HepG2 (cell line): ENCODE measurements at regions of chr2 and their contacts with region 1.

Region 1: GRCh38 chr2:177263451-177264208 is 897 bp downstream of the NFE2L2 start:
- DNase-seq: peak; percentile 96
- ATAC-seq: peak; percentile 61
- H3K4me3 ChIP-seq: peak overlapping the region; percentile 94 to 99 (median 98)
- H3K27ac ChIP-seq: peak overlapping the region; percentile 100
- H3K4me1 ChIP-seq: peaks cover 66% of the 10 kb centered on the region
- H3K27me3 ChIP-seq: no peaks in the 10 kb centered on the region; a peak in 1 of 5 replicates
- CTCF ChIP-seq: peak; percentile 98
- EP300 ChIP-seq: peak; percentile 92 to 99
- POLR2A ChIP-seq: peak; percentile 78 to 89
- RAD21 ChIP-seq: peak; percentile 99

Region 2: GRCh38 chr2:177078416-177078815 is 185.2 kb before region 1 on chr2:
- CTCF ChIA-PET with region 1: no interaction called
- POLR2A ChIA-PET with region 1: no interaction called
- in situ Hi-C with region 1: no loop called
- intact Hi-C with region 1: no loop called
- DNase-seq: no peak
- ATAC-seq: no peak
- H3K4me3 ChIP-seq: no peak overlapping the region
- H3K27ac ChIP-seq: no peak overlapping the region
- H3K4me1 ChIP-seq: no peaks in the 10 kb centered on the region
- H3K27me3 ChIP-seq: peaks cover 0 to 8% of the 10 kb centered on the region in 2 experiments; a peak in 2 of 5 replicates
- CTCF ChIP-seq: no peak
- EP300 ChIP-seq: no peak
- POLR2A ChIP-seq: no peak
- RAD21 ChIP-seq: no peak

Region 3: DNA sequence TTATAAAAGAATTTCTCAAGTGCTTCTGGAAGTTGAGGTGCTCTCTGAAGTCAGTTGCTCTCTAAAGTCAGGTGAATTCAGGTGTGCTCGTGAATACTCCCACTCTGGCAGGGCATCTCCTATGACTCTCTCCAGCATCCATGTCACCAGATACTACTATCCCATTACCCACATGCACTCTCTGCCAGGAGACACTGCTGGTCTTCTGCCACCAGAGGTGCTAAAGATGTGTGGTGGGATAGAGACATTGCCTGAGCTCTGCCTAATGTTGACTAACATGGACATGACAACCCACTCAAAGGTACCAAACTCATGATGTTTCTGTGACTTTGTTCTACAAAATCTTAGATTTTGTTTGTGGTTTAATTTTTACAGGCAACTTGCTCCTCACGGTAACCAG is 157.4 kb before region 1 on chr2:
- CTCF ChIA-PET with region 1: no interaction called
- POLR2A ChIA-PET with region 1: no interaction called
- in situ Hi-C with region 1: no loop called
- intact Hi-C with region 1: no loop called
- DNase-seq: peak; percentile 34
- ATAC-seq: peak; percentile 100
- H3K4me3 ChIP-seq: no peak overlapping the region
- H3K27ac ChIP-seq: no peak overlapping the region
- H3K4me1 ChIP-seq: no peaks in the 10 kb centered on the region
- H3K27me3 ChIP-seq: peaks cover 0 to 12% of the 10 kb centered on the region in 2 experiments; a peak in 2 of 5 replicates
- CTCF ChIP-seq: peak; percentile 35
- EP300 ChIP-seq: no peak
- POLR2A ChIP-seq: no peak
- RAD21 ChIP-seq: no peak

Region 4: DNA sequence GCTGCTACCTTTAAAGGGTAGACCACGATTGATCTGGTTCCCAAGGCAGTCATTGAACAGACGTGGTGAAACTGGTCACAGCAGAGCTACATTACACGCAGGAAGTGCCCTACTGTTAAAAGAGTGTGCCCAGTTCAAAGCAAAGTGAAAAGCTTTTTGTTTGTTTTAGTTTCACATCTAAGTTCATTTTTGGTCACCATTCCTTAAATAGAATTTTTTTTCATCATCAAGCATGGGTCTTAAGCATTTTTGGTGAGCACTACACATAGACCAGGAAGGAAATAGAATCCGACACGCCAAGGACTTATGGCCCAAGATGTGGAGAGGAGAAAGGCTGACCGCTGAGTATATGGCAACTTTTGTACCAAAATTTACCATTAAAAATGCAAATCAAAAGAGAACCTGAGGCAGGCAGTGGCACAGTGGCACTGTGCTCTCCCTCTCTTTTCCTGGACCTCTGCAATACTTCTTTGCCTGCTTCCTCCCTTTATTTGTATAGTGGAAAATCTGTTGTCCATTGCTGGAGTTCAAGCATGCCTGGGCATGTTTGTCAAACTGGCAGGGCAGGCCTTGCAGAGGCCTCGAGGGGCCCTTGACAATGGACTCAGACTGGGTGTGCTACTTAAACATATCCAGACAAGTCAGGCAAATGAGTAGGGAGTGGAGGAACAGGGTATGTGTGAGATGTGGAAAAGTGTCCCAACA is 93.7 kb before region 1 on chr2:
- CTCF ChIA-PET with region 1: interaction called, 13 read pairs
- POLR2A ChIA-PET with region 1: interaction called, 81 read pairs
- in situ Hi-C with region 1: no loop called
- intact Hi-C with region 1: loop called (anchors 1 kb)
- DNase-seq: peak; percentile 86
- ATAC-seq: peak; percentile 46
- H3K4me3 ChIP-seq: no peak overlapping the region
- H3K27ac ChIP-seq: peak overlapping the region; percentile 69
- H3K4me1 ChIP-seq: peaks cover 96% of the 10 kb centered on the region
- H3K27me3 ChIP-seq: no peaks in the 10 kb centered on the region
- CTCF ChIP-seq: no peak
- EP300 ChIP-seq: peak in 1 of 2 experiments; percentile 73; a peak in 2 of 4 replicates
- POLR2A ChIP-seq: 0 out of 4 replicates have a peak, but pooled peaks of 1 of the 2 experiments have one; percentile 35
- RAD21 ChIP-seq: peak; percentile 25; the same call in 1 of the 2 replicates

Region 5: DNA sequence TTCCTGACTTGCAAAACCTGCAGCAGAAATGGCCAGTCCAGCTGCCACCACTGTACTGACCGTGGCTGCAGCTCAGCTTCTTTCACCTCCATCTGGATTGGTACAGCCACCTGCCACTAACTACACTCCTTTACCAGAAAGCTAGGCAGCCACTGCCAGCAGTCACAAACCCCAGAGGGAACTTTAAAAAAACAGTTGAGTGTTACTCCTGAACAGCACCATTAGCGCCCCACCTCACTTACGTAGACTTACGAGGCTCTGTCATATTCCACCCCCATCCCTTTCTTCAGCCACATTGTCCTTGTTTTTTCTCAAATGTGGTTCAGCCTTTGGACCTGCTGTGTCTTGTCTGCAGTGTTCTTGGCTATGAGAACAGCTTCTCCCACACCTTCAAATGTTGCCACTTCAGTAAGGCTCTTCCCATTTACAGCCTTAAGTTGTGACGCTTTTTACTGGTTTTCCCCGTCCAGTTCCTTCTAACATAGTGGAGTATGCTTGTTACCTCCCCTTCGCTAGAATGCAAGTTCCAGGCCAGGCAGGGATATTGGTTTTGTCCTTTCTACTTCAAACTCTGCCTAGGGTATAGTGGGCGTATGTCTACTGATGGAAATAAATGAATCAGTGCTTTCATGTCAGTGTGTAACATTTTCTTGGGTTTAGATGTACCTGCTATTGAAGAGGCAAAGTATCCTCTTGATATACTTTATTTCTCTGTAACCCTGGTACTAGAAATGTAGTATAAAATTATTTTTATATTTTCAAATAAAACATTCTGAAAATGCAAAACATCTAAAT is 34.0 kb before region 1 on chr2:
- CTCF ChIA-PET with region 1: no interaction called
- POLR2A ChIA-PET with region 1: interaction called, 19 read pairs
- in situ Hi-C with region 1: no loop called
- intact Hi-C with region 1: no loop called
- DNase-seq: no peak
- ATAC-seq: peak; percentile 12
- H3K4me3 ChIP-seq: no peak overlapping the region
- H3K27ac ChIP-seq: no peak overlapping the region
- H3K4me1 ChIP-seq: peaks cover 29% of the 10 kb centered on the region
- H3K27me3 ChIP-seq: no peaks in the 10 kb centered on the region
- CTCF ChIP-seq: no peak
- EP300 ChIP-seq: no peak
- POLR2A ChIP-seq: peak in 1 of 2 experiments; percentile 66; a peak in 2 of 4 replicates
- RAD21 ChIP-seq: no peak

Region 6: DNA sequence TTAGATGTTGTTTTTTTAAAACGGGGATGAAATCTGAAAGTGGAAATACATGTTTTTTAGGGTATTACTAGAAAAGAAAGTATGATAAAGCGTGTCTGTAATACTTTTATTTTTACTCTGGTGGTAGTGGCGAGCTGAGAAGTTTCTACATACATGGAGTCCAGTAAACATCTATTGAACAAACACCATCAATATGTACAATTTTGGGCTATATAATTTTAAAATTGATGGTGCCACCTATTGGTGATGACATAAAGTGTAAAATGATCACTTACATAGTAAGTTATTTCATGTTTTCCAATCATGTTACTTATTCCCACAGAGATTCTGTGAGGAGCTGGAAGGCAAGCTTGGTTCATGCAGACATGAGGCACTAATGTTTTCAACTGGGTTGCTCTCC is 32.4 kb after region 1 on chr2:
- CTCF ChIA-PET with region 1: interaction called, 11 read pairs
- POLR2A ChIA-PET with region 1: interaction called, 9 read pairs
- in situ Hi-C with region 1: no loop called
- intact Hi-C with region 1: loop called (anchors 5 kb)
- DNase-seq: peak; percentile 36
- ATAC-seq: peak; percentile 30; the same call in 2 of the 3 replicates
- H3K4me3 ChIP-seq: no peak overlapping the region
- H3K27ac ChIP-seq: no peak overlapping the region
- H3K4me1 ChIP-seq: peaks cover 42% of the 10 kb centered on the region
- H3K27me3 ChIP-seq: no peaks in the 10 kb centered on the region
- CTCF ChIP-seq: peak; percentile 54
- EP300 ChIP-seq: no peak
- POLR2A ChIP-seq: no peak
- RAD21 ChIP-seq: no peak

Region 7: GRCh38 chr2:177397481-177398289 is 134.1 kb after region 1 on chr2:
- CTCF ChIA-PET with region 1: no interaction called
- POLR2A ChIA-PET with region 1: interaction called, 22 read pairs
- in situ Hi-C with region 1: loop called (anchors 5 kb)
- intact Hi-C with region 1: loop called (anchors 2 kb)
- DNase-seq: peak; percentile 97
- ATAC-seq: peak; percentile 68
- H3K4me3 ChIP-seq: peak overlapping the region; percentile 28 to 43 (median 39); a peak in 4 of 6 replicates
- H3K27ac ChIP-seq: peak overlapping the region; percentile 86
- H3K4me1 ChIP-seq: peaks cover 88% of the 10 kb centered on the region
- H3K27me3 ChIP-seq: no peaks in the 10 kb centered on the region; a peak in 1 of 5 replicates
- CTCF ChIP-seq: 0 out of 2 replicates have a peak, but pooled peaks have one; percentile 10
- EP300 ChIP-seq: peak in 1 of 2 experiments; percentile 98; a peak in 2 of 4 replicates
- POLR2A ChIP-seq: no peak
- RAD21 ChIP-seq: peak; percentile 28; the same call in 1 of the 2 replicates

Region 8: GRCh38 chr2:177552422-177553175 is 289.0 kb after region 1 on chr2:
- CTCF ChIA-PET with region 1: no interaction called
- POLR2A ChIA-PET with region 1: no interaction called
- in situ Hi-C with region 1: no loop called
- intact Hi-C with region 1: loop called (anchors 1 kb)
- DNase-seq: peak; percentile 89
- ATAC-seq: peak; percentile 93
- H3K4me3 ChIP-seq: peak overlapping the region; percentile 76 to 92 (median 82)
- H3K27ac ChIP-seq: peak overlapping the region; percentile 93
- H3K4me1 ChIP-seq: peaks cover 15% of the 10 kb centered on the region
- H3K27me3 ChIP-seq: no peaks in the 10 kb centered on the region; a peak in 1 of 5 replicates
- CTCF ChIP-seq: peak; percentile 36
- EP300 ChIP-seq: no peak
- POLR2A ChIP-seq: peak; percentile 33 to 50; a peak in 2 of 4 replicates
- RAD21 ChIP-seq: peak; percentile 40; the same call in 1 of the 2 replicates